ENCODE measurements at regions of chr17 and their contacts with region 1.

Region 1: DNA sequence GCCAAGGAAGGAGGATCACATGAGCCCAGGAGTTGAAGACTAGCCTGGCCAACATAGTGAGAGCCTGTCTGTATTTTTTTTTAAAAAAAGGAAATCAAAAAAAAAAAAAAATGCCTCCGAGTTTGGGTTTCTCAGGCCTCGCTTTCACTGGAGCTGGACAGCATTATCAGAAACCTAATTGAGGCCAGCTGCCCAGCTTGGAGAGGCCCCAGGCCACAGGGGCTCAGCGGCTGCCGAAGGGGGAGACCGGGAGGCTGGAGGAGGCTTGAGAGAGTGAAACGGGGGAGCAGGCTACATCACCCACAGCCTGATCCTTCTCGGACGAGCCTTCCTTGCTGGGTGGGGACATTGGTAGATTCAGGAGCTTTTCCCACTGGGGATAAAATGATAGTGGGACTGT is 5.1 kb downstream of the TTYH2 start:
- DNase-seq: no peak
- H3K4me3 ChIP-seq: no peak overlapping the region
- H3K27ac ChIP-seq: no peak overlapping the region
- H3K4me1 ChIP-seq: peaks cover 15% of the 10 kb centered on the region
- H3K27me3 ChIP-seq: no peaks in the 10 kb centered on the region
- CTCF ChIP-seq: no peak
- POLR2A ChIP-seq: no peak

Region 2: GRCh38 chr17:74240618-74241205 is 22.3 kb after region 1 on chr17:
- intact Hi-C with region 1: loop called (anchors 2 kb)
- DNase-seq: no peak
- H3K4me3 ChIP-seq: no peak overlapping the region
- H3K27ac ChIP-seq: no peak overlapping the region
- H3K4me1 ChIP-seq: no peaks in the 10 kb centered on the region
- H3K27me3 ChIP-seq: no peaks in the 10 kb centered on the region
- CTCF ChIP-seq: no peak
- POLR2A ChIP-seq: no peak

Region 3: DNA sequence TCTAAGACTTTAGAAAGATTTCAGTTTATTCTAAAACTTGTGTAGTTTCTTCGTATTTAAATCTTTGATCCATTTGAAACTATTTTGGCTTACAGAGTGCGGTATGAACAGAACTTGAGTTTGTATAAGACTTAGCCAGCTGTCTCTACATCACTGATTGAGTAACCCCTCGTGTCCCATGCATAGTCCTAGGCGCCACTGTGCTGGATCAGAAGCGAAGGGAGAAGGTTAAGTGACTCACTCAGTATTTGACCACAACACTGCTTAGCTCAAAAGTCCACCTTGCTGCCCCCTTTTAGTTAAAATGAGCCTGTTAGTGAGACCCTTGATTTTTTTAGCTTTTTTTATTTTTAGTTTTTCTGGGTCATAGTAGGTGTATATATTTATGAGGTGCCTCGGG is 284.4 kb after region 1 on chr17:
- intact Hi-C with region 1: no loop called
- DNase-seq: no peak
- H3K4me3 ChIP-seq: no peak overlapping the region
- H3K27ac ChIP-seq: no peak overlapping the region
- H3K4me1 ChIP-seq: no peaks in the 10 kb centered on the region
- H3K27me3 ChIP-seq: no peaks in the 10 kb centered on the region
- CTCF ChIP-seq: no peak
- POLR2A ChIP-seq: no peak

Region 4: GRCh38 chr17:74528491-74529199 is 310.2 kb after region 1 on chr17:
- intact Hi-C with region 1: no loop called
- DNase-seq: peak in 1 of 2 donors; percentile 70
- H3K4me3 ChIP-seq: no peak overlapping the region
- H3K27ac ChIP-seq: no peak overlapping the region
- H3K4me1 ChIP-seq: no peaks in the 10 kb centered on the region
- H3K27me3 ChIP-seq: no peaks in the 10 kb centered on the region
- CTCF ChIP-seq: no peak
- POLR2A ChIP-seq: no peak

Measured in vagina (tissue), 2 donors.